Right cardiac atrium (tissue), 5 donors: ENCODE measurements at regions of chr20 and their contacts with region 1.

Region 1: GRCh38 chr20:1802385-1803060 is 92.7 kb upstream of the SIRPA start:
- DNase-seq: peak; percentile 79 to 89 (median 88)
- ATAC-seq: peak; percentile 87 to 91
- H3K4me3 ChIP-seq: peak overlapping the region; percentile 55
- H3K27ac ChIP-seq: no peak overlapping the region
- H3K4me1 ChIP-seq: no peaks in the 10 kb centered on the region
- H3K27me3 ChIP-seq: no peaks in the 10 kb centered on the region

Region 2: DNA sequence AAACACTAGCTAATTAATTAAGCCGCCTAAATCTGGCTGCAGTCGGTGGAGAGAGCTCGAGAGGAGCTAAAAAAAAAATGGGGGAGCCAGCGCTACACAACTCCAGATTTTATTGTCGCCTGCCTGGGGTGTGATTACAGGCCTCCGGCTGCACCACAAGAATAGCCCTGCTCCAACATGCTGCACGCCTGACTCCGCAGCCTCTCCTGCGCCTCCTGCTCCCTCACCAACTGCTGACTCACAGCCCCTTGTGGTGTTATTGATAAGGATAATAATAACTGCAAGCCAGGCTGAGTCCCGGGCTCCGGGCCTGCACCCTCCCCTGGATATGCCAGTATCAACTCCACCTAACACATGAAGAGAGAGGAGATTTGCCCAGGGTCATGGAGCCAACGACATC is 109.5 kb after region 1 on chr20:
- intact Hi-C with region 1: no loop called
- DNase-seq: peak; percentile 54 to 81 (median 75)
- ATAC-seq: peak; percentile 74 to 83
- H3K4me3 ChIP-seq: no peak overlapping the region
- H3K27ac ChIP-seq: peak overlapping the region; percentile 30
- H3K4me1 ChIP-seq: peaks cover 4% of the 10 kb centered on the region
- H3K27me3 ChIP-seq: no peaks in the 10 kb centered on the region

Region 3: DNA sequence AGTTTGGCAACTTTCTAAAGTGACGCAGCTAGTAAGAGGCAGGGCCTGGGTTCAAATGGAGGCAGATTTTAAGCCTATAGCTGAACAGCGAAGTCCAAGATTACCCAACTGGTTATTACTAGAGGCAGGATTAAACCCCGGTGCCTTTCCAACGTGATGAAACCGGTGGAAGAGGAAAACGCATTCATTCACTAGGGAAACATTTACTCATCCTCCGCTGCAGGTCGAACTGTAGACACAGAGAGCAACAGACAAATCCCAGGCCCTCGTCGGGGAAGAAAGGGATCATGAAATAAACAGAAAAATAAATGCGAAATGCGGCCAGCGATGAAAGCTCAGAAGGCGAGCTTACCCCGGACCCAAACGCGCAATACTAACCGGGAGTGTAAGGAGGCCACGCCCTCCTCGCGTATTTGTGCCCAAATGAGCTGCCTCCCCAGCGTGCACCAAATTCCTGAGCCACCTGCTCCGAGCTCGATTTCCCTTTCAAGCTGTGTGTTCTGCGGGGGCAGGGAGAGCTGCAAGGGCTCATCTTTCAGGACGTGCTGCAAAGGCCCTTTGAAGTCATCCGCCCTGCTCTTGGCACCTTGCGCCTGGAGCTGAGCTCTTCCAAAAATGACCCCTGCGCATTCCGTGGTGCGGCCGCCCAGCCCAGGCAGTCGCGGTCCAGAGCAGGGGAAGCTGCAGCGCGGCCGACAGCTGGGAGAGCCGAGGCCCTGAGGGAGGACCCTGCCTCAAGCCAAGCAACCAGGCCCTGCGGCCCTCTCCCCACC is 144.4 kb after region 1 on chr20:
- intact Hi-C with region 1: loop called in 2 of 4 experiments (anchors 10 kb)
- DNase-seq: peak; percentile 55 to 81 (median 71)
- ATAC-seq: no peak
- H3K4me3 ChIP-seq: no peak overlapping the region
- H3K27ac ChIP-seq: no peak overlapping the region
- H3K4me1 ChIP-seq: peaks cover 4% of the 10 kb centered on the region
- H3K27me3 ChIP-seq: no peaks in the 10 kb centered on the region

Region 4: DNA sequence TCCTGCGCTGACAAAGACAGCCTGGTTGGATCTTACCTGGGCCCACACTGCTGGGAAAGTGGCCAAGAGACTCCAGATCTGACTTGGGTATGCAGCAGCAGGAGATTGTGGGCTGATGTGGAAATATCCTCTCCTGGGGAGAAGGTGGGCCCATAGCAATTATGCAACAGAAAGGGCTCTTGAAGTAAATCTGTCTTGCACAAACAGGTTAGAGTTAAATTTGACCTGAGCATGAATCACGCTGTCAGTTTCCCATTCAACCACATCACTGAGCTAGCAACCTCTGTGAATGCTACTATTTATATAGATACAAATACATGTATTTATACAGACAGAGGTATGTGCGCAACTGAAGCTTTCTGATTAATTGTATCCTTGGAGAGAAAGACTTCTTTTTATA is 219.6 kb after region 1 on chr20:
- intact Hi-C with region 1: no loop called
- DNase-seq: no peak
- ATAC-seq: no peak
- H3K4me3 ChIP-seq: no peak overlapping the region
- H3K27ac ChIP-seq: no peak overlapping the region
- H3K4me1 ChIP-seq: no peaks in the 10 kb centered on the region
- H3K27me3 ChIP-seq: no peaks in the 10 kb centered on the region